Testis (tissue), 5 donors: ENCODE measurements at regions of chr15 and their contacts with region 1.

Region 1: GRCh38 chr15:80776420-80777045 is 2.6 kb upstream of the CEMIP start:
- DNase-seq: peak; percentile 87
- H3K4me3 ChIP-seq: no peak overlapping the region
- H3K27ac ChIP-seq: no peak overlapping the region
- H3K4me1 ChIP-seq: no peaks in the 10 kb centered on the region
- H3K27me3 ChIP-seq: no peaks in the 10 kb centered on the region
- CTCF ChIP-seq: peak; percentile 77 to 86 (median 78)
- POLR2A ChIP-seq: no peak

Region 2: GRCh38 chr15:80317389-80318182 is 458.9 kb before region 1 on chr15:
- intact Hi-C with region 1: no loop called
- DNase-seq: no peak
- H3K4me3 ChIP-seq: no peak overlapping the region
- H3K27ac ChIP-seq: no peak overlapping the region
- H3K4me1 ChIP-seq: no peaks in the 10 kb centered on the region
- H3K27me3 ChIP-seq: no peaks in the 10 kb centered on the region
- CTCF ChIP-seq: no peak
- POLR2A ChIP-seq: no peak

Region 3: GRCh38 chr15:80455668-80456442 is 320.7 kb before region 1 on chr15:
- intact Hi-C with region 1: loop called (anchors 5 kb)
- DNase-seq: peak; percentile 75
- H3K4me3 ChIP-seq: no peak overlapping the region
- H3K27ac ChIP-seq: no peak overlapping the region
- H3K4me1 ChIP-seq: peaks cover 23% of the 10 kb centered on the region
- H3K27me3 ChIP-seq: no peaks in the 10 kb centered on the region
- CTCF ChIP-seq: peak; percentile 89 to 92 (median 91)
- POLR2A ChIP-seq: no peak

Region 4: GRCh38 chr15:80570553-80570952 is 206.0 kb before region 1 on chr15:
- intact Hi-C with region 1: loop called (anchors 5 kb)
- DNase-seq: peak; percentile 4
- H3K4me3 ChIP-seq: no peak overlapping the region
- H3K27ac ChIP-seq: no peak overlapping the region
- H3K4me1 ChIP-seq: peaks cover 8% of the 10 kb centered on the region
- H3K27me3 ChIP-seq: no peaks in the 10 kb centered on the region
- CTCF ChIP-seq: no peak
- POLR2A ChIP-seq: no peak

Region 5: GRCh38 chr15:80953936-80954778 is 177.6 kb after region 1 on chr15:
- intact Hi-C with region 1: loop called (anchors 10 kb)
- DNase-seq: no peak
- H3K4me3 ChIP-seq: no peak overlapping the region
- H3K27ac ChIP-seq: no peak overlapping the region
- H3K4me1 ChIP-seq: no peaks in the 10 kb centered on the region
- H3K27me3 ChIP-seq: no peaks in the 10 kb centered on the region
- CTCF ChIP-seq: no peak
- POLR2A ChIP-seq: no peak